ENCODE measurements at regions of chr12 and their contacts with region 1.

Region 1: GRCh38 chr12:54439521-54440255 is 20.6 kb upstream of the ITGA5 start:
- DNase-seq: no peak
- ATAC-seq: peak; percentile 87 to 92
- H3K4me3 ChIP-seq: no peak overlapping the region
- H3K27ac ChIP-seq: no peak overlapping the region
- H3K4me1 ChIP-seq: peaks cover 7% of the 10 kb centered on the region
- H3K27me3 ChIP-seq: no peaks in the 10 kb centered on the region
- CTCF ChIP-seq: peak; percentile 74

Region 2: DNA sequence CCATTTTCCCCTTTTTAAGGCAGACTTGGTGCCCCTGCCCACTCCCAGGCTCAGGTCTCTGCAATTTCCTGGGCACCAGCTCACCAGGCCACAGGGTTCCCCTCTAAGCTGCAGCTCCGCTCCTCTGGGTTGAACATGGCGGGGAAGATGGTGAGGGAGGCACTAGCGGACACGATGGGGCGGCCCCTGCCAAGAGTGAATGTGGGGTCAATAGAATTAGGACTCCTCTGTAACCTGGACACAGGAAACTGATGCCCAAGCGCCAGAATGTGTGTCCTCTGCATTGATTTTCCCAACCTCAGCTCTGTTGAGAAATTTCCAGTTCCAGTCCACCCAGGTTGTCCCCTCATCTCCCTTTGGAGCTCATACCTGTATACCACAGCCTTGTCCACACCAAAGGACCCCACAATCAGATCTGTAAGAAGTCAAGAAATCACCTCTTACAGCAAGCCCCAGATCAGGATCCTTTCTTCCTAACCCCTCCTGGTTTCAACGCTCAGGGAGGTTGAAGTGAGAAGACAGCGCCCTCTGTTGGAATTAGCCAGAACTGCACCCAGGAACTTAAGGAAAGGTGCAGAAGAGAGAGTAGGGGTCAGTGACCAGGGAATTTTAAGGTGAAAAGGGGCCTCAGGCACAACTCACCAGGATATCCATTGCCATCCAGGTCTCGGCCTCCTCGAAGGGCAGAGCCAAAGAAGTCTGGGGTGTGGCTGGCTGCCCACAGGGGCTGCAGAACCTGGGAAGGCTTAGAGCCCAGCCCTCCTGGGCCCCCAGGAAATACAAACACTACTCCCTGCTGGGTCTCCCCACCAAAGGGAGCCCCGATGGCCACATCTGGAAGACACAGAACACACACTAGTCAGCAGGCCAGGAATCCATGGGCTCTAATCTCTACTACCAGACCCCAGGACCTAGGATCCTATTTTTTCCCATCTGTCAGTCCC is 35.4 kb before region 1 on chr12:
- intact Hi-C with region 1: loop called (anchors 5 kb)
- DNase-seq: no peak
- ATAC-seq: peak; percentile 20 to 29
- H3K4me3 ChIP-seq: no peak overlapping the region
- H3K27ac ChIP-seq: peak overlapping the region; percentile 10
- H3K4me1 ChIP-seq: peaks cover 38% of the 10 kb centered on the region
- H3K27me3 ChIP-seq: no peaks in the 10 kb centered on the region
- CTCF ChIP-seq: peak; percentile 93

Measured in lower lobe of right lung (tissue), 2 donors.